ENCODE measurements at regions of chr10 and their contacts with region 1.

Region 1: GRCh38 chr10:8059959-8060703 is 5.6 kb downstream of the GATA3 start:
- DNase-seq: peak; percentile 87
- H3K4me3 Mint-ChIP-seq: peak overlapping the region; percentile 98
- H3K27ac Mint-ChIP-seq: peak overlapping the region; percentile 99
- H3K4me1 Mint-ChIP-seq: peaks cover 75% of the 10 kb centered on the region
- H3K27me3 Mint-ChIP-seq: no peaks in the 10 kb centered on the region

Region 2: DNA sequence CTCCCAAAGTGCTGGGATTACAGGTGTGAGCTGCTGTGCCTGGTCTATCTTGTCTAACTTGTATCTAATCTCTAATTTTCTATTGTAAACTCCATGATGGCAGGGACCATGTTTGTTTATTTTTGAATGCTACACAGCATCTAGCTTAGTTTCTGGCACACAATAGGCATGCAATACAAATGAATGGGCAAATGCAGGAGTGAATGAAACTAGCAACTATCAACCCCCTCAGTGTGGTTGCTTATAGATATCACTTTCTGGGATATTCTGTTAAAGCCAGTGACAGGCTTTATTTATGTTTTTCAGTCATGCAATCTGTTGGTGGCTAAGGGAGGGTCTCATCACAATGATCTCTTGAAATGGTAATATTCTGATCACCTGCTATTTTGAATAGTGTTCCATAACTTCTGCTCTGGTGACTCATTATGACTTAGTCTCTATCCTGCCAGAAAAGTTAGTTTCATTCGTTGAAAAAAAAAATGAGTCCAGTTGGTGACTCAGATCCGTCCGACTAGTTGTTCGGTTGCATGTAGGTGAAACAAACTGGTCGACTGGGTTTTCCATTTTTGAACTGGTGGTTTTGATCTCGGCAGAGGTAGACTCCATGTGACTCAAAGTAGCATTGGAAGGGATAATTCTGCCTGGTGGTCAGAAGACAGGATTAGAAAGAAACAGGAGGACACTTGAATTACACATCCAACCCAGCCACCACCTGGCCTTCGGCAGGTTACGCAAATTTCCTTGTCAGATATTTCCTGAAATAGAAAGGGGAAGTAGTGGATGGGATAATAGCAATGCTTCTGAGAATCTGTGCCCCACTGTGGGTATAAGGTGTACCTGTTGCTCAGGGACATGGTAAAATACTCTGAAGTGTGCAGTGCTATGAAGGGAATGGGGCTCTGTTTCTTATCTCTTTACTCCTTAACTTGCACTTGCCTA is 71.1 kb after region 1 on chr10:
- CTCF ChIA-PET with region 1: interaction called, 10 read pairs
- POLR2A ChIA-PET with region 1: interaction called, 10 read pairs
- intact Hi-C with region 1: loop called (anchors 1 kb)
- DNase-seq: peak; percentile 71
- H3K4me3 Mint-ChIP-seq: peak overlapping the region; percentile 38
- H3K27ac Mint-ChIP-seq: peak overlapping the region; percentile 50
- H3K4me1 Mint-ChIP-seq: peaks cover 42% of the 10 kb centered on the region
- H3K27me3 Mint-ChIP-seq: peaks cover 9% of the 10 kb centered on the region

Region 3: GRCh38 chr10:8183241-8183704 is 123.1 kb after region 1 on chr10:
- CTCF ChIA-PET with region 1: no interaction called
- POLR2A ChIA-PET with region 1: no interaction called
- intact Hi-C with region 1: loop called (anchors 5 kb)
- DNase-seq: peak; percentile 36
- H3K4me3 Mint-ChIP-seq: peak overlapping the region; percentile 0
- H3K27ac Mint-ChIP-seq: peak overlapping the region; percentile 47
- H3K4me1 Mint-ChIP-seq: peaks cover 23% of the 10 kb centered on the region
- H3K27me3 Mint-ChIP-seq: peaks cover 2% of the 10 kb centered on the region

Region 4: DNA sequence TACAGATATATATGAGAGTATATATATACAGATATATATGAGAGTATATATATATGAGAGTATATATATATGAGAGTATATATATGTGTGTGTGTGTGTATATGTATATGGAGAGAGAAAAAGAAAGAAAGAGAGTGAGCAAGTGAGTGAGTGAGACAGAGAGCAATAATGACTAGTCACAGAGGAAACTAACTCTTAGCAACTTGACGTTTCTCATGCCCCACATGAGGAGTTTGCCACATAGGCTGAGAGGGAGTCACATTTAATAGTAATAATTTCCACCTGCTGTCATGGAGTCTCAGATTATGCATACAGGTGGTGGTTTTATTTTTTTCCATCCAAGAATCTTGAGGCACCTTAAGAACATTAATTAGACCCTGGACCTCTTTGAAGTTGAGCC is 194.2 kb after region 1 on chr10:
- CTCF ChIA-PET with region 1: interaction called, 3 read pairs
- POLR2A ChIA-PET with region 1: no interaction called
- intact Hi-C with region 1: loop called (anchors 2 kb)
- DNase-seq: peak; percentile 54
- H3K4me3 Mint-ChIP-seq: peak overlapping the region; percentile 53
- H3K27ac Mint-ChIP-seq: peak overlapping the region; percentile 68
- H3K4me1 Mint-ChIP-seq: peaks cover 23% of the 10 kb centered on the region
- H3K27me3 Mint-ChIP-seq: no peaks in the 10 kb centered on the region

Region 5: GRCh38 chr10:8331883-8332729 is 272.0 kb after region 1 on chr10:
- CTCF ChIA-PET with region 1: interaction called, 7 read pairs
- POLR2A ChIA-PET with region 1: interaction called, 20 read pairs
- intact Hi-C with region 1: loop called (anchors 1 kb)
- DNase-seq: peak; percentile 90
- H3K4me3 Mint-ChIP-seq: peak overlapping the region; percentile 72
- H3K27ac Mint-ChIP-seq: peak overlapping the region; percentile 79
- H3K4me1 Mint-ChIP-seq: peaks cover 72% of the 10 kb centered on the region
- H3K27me3 Mint-ChIP-seq: no peaks in the 10 kb centered on the region

Region 6: GRCh38 chr10:8404391-8405120 is 344.4 kb after region 1 on chr10:
- CTCF ChIA-PET with region 1: interaction called, 4 read pairs
- POLR2A ChIA-PET with region 1: interaction called, 5 read pairs
- intact Hi-C with region 1: loop called (anchors 2 kb)
- DNase-seq: peak; percentile 51
- H3K4me3 Mint-ChIP-seq: peak overlapping the region; percentile 65
- H3K27ac Mint-ChIP-seq: peak overlapping the region; percentile 64
- H3K4me1 Mint-ChIP-seq: peaks cover 80% of the 10 kb centered on the region
- H3K27me3 Mint-ChIP-seq: no peaks in the 10 kb centered on the region

Region 7: DNA sequence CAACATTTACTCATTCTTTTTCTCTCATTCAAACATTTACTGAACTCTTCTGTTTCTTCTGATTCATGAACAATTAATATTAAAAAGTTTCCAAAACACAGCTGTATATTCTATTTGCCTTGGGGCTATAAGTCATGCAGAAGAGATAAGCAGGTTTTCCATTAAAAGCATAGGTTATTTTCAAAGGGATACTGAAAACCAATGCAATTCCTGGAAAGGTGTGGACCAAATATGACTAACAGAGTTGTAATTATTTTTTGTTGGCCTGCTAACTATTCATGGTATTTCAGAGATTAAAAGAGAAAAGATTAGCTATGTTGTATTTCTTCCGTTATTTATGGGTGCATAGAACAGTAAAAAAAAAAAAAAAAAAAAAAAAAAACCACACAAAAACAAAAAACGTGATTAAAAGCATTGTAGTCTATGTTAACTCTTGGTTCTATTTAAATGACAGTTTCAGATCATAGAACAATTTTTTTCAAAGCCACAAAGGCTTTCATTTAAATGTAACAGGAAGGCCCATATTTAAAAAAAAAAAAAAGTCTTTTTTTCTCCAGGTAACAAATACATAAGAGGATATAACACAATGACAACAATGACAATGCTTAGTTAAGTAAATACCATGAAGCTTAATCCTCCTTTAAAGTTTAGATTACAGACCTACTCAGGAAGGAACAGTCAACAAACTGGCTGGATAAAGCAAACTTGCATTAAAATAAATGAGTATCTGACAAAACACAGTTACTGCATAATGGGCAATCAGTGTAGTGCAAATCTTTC is 1037.3 kb after region 1 on chr10:
- CTCF ChIA-PET with region 1: no interaction called
- POLR2A ChIA-PET with region 1: no interaction called
- intact Hi-C with region 1: loop called (anchors 10 kb)
- DNase-seq: no peak
- H3K4me3 Mint-ChIP-seq: no peak overlapping the region
- H3K27ac Mint-ChIP-seq: peak overlapping the region; percentile 28
- H3K4me1 Mint-ChIP-seq: peaks cover 28% of the 10 kb centered on the region
- H3K27me3 Mint-ChIP-seq: no peaks in the 10 kb centered on the region